ENCODE measurements at regions of chr20 and their contacts with region 1.

Region 1: GRCh38 chr20:36028106-36028826 is 59.9 kb downstream of the CNBD2 start:
- DNase-seq: no peak

Region 2: DNA sequence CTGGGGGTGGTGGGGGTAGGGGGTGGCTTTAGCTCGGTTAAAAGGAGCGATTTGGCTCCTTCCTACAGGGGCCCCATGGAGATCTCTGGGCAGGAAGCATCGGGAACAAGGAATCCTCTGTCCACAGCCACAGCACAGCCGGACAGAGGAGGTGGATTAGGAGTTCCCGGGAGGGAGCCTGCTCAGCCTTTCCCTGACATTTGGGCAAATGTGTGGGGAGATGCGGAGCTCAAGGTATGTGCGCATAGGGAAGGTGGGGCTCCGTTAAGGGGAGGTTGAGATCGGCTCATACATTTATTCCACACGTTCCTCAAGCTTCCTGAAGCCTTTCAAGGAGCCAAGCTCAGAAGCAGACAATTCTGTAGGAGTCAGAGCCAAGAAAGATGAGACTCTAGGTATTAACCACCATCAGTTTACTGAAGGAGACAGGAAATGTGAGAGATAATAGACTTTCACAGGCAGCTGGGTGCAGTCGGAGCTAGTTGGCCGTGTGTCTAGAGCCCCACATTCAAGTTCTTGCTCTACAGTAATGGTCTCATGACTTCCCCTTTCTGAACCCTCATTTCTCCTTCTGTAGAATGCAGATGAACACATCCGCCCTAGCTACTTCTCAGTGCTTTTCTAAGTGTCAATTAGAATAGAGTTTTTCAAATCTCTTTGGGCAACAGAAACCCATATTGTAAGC is 85.4 kb after region 1 on chr20:
- in situ Hi-C with region 1: loop called (anchors 5 kb)
- DNase-seq: no peak